Body of pancreas (tissue), 4 donors: ENCODE measurements at regions of chr17 and their contacts with region 1.

Region 1: DNA sequence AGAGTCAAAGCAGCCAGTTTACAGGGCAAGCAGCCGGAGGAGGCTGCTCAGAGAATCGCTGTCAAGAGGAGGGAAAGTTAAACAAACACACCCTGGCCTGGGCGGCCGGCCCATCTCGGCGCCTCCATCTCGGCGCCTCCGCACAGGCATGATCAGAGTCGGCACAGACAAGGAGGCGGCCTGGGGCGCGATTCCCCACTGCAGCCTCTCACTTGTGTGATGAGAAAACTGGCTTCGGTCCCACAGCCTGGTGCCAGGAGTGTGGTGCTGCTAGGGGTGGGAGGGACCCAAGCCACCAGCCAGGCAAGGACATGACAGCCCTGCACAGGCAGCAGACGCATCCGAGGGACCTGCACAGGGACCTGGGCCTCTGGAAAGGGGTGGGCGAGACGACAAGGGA is 17.7 kb downstream of the SLC38A10 start:
- DNase-seq: peak in 1 of 4 donors; percentile 39
- ATAC-seq: peak; percentile 10
- H3K4me3 ChIP-seq: no peak overlapping the region
- H3K27ac ChIP-seq: no peak overlapping the region
- H3K4me1 ChIP-seq: no peaks in the 10 kb centered on the region
- H3K27me3 ChIP-seq: no peaks in the 10 kb centered on the region
- CTCF ChIP-seq: no peak
- POLR2A ChIP-seq: no peak

Region 2: DNA sequence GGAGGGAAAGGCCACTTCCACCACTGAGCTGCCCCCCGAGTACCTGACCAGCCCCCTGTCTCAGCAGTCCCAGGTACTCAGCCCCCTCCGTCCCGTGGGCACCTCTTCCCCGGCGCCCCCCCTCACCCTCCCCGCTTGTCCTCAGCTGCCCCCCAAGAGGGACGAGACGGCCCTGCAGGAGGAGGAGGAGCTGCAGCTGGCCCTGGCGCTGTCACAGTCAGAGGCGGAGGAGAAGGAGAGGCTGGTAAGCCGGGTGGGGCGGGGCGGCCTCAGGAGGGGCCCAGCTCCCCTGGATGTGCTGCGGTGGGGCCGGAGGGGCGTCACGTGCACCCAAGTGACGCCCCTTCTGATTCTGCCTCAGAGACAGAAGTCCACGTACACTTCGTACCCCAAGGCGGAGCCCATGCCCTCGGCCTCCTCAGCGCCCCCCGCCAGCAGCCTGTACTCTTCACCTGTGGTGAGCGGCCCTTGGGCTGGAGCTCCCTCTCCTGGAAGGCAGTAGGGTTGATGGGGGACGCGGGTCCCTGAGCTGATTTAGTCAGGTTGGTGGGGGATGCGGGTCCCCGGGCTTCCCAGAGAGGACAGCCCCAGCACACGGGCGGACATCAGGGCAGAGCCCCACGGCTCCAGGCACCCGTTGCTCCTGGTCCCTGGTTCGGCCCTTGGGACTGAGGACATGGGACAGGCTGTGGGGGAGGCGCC is 416.2 kb after region 1 on chr17:
- intact Hi-C with region 1: loop called (anchors 10 kb)
- DNase-seq: no peak
- ATAC-seq: no peak
- H3K4me3 ChIP-seq: no peak overlapping the region
- H3K27ac ChIP-seq: no peak overlapping the region
- H3K4me1 ChIP-seq: no peaks in the 10 kb centered on the region
- H3K27me3 ChIP-seq: no peaks in the 10 kb centered on the region
- CTCF ChIP-seq: no peak
- POLR2A ChIP-seq: no peak